Activated CD4-positive, alpha-beta memory T cell treated with anti-CD3 and anti-CD28 coated beads for 36 hours (primary cell): ENCODE measurements at regions of chr3 and their contacts with region 1.

Region 1: DNA sequence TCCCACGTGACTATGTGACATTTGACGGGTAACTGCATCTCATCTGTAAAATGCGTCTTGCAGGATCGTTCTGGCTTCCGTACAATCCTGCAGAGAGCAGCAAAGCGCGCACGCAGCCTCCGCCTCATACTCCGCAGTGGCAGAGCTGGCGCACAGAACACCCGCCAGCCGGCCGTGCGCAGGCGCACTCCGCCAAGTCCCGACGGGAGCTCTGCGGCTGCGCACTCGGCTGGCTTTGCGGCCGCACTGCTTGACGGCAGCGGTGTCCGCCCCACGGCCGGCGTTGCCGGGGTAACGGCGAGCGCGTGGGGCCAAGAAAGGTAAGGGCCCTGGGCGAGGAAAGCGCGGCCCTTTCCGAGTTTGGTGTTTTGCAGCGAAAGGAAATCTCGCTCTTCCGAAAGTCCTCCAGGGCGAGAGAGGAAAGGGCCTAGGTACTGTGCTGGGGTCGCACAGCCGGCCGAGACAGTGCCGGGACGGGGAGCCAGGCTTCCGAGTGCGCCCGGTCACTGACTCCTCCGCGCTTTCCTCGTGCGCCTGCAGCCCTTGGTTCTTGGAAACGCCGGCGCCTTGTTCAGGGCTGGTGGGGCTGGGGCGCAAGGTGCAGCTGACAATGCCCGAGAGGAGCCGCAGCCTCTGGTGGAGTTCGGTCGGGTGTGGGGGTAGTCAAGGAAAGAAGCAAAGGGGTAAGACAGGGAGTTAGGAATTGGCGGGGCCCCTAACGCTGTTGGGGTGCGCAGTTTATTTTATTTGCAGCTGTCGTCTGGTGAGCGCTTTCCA is at the start of gene TSEN2:
- DNase-seq: peak; percentile 97
- H3K4me3 Mint-ChIP-seq: peak within 1 kb of the TSS; percentile 99
- H3K27ac Mint-ChIP-seq: peak within 1 kb of the TSS; percentile 89
- H3K4me1 Mint-ChIP-seq: peaks cover 36% of the 10 kb centered on the region
- H3K27me3 Mint-ChIP-seq: no peaks in the 10 kb centered on the region
- total RNA-seq, gene TSEN2: 13.8 to 15.4 TPM

Region 2: GRCh38 chr3:11846281-11847034 is 637.9 kb before region 1 on chr3 and contains the start of gene TAMM41:
- CTCF ChIA-PET with region 1: interaction called, 3 read pairs
- POLR2A ChIA-PET with region 1: no interaction called
- intact Hi-C with region 1: loop called (anchors 10 kb)
- DNase-seq: peak; percentile 95
- H3K4me3 Mint-ChIP-seq: peak within 1 kb of the TSS; percentile 97
- H3K27ac Mint-ChIP-seq: peak within 1 kb of the TSS; percentile 87
- H3K4me1 Mint-ChIP-seq: peaks cover 28% of the 10 kb centered on the region
- H3K27me3 Mint-ChIP-seq: no peaks in the 10 kb centered on the region
- total RNA-seq, gene TAMM41: 25.5 to 25.6 TPM

Region 3: GRCh38 chr3:12175844-12176453 is 308.4 kb before region 1 on chr3:
- CTCF ChIA-PET with region 1: interaction called, 37 read pairs
- POLR2A ChIA-PET with region 1: interaction called, 3 read pairs
- intact Hi-C with region 1: no loop called
- DNase-seq: peak; percentile 62
- H3K4me3 Mint-ChIP-seq: no peak overlapping the region
- H3K27ac Mint-ChIP-seq: no peak overlapping the region
- H3K4me1 Mint-ChIP-seq: peaks cover 18% of the 10 kb centered on the region
- H3K27me3 Mint-ChIP-seq: no peaks in the 10 kb centered on the region

Region 4: GRCh38 chr3:12395349-12396012 is 88.9 kb before region 1 on chr3:
- CTCF ChIA-PET with region 1: interaction called, 10 read pairs
- POLR2A ChIA-PET with region 1: interaction called, 3 read pairs
- intact Hi-C with region 1: no loop called
- DNase-seq: peak; percentile 46
- H3K4me3 Mint-ChIP-seq: peak overlapping the region; percentile 20
- H3K27ac Mint-ChIP-seq: peak overlapping the region; percentile 40
- H3K4me1 Mint-ChIP-seq: peaks cover 16% of the 10 kb centered on the region
- H3K27me3 Mint-ChIP-seq: peaks cover 27% of the 10 kb centered on the region

Region 5: GRCh38 chr3:12454076-12454815 is 30.1 kb before region 1 on chr3:
- CTCF ChIA-PET with region 1: no interaction called
- POLR2A ChIA-PET with region 1: no interaction called
- intact Hi-C with region 1: no loop called
- DNase-seq: no peak
- H3K4me3 Mint-ChIP-seq: no peak overlapping the region
- H3K27ac Mint-ChIP-seq: no peak overlapping the region
- H3K4me1 Mint-ChIP-seq: peaks cover 10% of the 10 kb centered on the region
- H3K27me3 Mint-ChIP-seq: no peaks in the 10 kb centered on the region

Region 6: GRCh38 chr3:12556671-12557472 is 72.5 kb after region 1 on chr3 and contains the start of gene MKRN2:
- CTCF ChIA-PET with region 1: interaction called, 3 read pairs
- POLR2A ChIA-PET with region 1: no interaction called
- intact Hi-C with region 1: loop called (anchors 1 kb)
- DNase-seq: peak; percentile 89
- H3K4me3 Mint-ChIP-seq: peak within 1 kb of the TSS; percentile 78
- H3K27ac Mint-ChIP-seq: peak within 1 kb of the TSS; percentile 91
- H3K4me1 Mint-ChIP-seq: peaks cover 57% of the 10 kb centered on the region
- H3K27me3 Mint-ChIP-seq: peaks cover 26% of the 10 kb centered on the region
- total RNA-seq, gene MKRN2: 28.5 to 30.1 TPM

Region 7: DNA sequence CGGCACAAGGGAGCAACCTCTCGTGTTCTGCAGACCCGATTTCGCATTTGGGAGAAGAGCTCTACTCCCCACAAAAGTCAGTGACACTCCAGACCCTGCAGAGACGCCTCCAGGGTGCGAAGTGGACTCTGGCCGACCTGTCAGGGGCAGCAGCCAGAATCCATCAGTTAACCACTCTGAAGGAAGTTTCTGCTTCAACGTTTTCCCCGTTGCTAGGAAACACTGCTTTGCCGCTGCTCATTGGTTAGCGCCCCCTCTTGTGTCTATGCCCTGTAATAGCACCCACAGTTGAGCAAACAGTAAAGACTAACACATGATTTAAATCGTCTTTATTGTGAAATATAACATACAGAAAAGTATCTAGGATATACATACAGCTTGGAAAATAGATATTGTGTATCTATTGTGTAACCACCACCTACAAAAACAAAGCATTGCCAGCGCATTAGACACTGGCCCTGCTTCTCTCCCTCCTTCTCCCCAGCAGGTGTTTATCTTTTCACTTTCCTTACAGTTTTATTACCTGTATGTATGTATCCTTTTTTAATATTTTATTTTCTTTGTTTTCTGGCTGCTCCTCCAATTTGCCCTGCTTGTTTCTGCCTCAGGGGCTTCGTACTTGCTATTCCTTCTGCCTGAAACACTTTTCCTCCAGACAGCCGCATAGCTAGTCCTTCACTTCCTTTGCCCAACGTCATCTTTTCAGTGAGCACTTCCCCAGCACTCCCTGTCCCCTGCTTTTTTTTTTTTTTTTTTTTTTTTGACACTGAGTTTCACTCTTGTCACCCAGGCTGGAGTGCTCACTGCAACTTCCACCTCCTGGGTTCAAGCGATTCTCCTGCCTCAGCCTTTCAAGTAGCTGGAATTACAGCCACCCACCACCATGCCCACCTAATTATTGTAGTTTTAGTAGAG is 235.9 kb after region 1 on chr3:
- CTCF ChIA-PET with region 1: interaction called, 5 read pairs
- POLR2A ChIA-PET with region 1: no interaction called
- intact Hi-C with region 1: loop called (anchors 2 kb)
- DNase-seq: peak; percentile 79
- H3K4me3 Mint-ChIP-seq: peak overlapping the region; percentile 38
- H3K27ac Mint-ChIP-seq: no peak overlapping the region
- H3K4me1 Mint-ChIP-seq: peaks cover 9% of the 10 kb centered on the region
- H3K27me3 Mint-ChIP-seq: no peaks in the 10 kb centered on the region